Activated CD4-positive, alpha-beta memory T cell treated with anti-CD3 and anti-CD28 coated beads for 36 hours (primary cell): ENCODE measurements at regions of chr19 and their contacts with region 1.

Region 1: DNA sequence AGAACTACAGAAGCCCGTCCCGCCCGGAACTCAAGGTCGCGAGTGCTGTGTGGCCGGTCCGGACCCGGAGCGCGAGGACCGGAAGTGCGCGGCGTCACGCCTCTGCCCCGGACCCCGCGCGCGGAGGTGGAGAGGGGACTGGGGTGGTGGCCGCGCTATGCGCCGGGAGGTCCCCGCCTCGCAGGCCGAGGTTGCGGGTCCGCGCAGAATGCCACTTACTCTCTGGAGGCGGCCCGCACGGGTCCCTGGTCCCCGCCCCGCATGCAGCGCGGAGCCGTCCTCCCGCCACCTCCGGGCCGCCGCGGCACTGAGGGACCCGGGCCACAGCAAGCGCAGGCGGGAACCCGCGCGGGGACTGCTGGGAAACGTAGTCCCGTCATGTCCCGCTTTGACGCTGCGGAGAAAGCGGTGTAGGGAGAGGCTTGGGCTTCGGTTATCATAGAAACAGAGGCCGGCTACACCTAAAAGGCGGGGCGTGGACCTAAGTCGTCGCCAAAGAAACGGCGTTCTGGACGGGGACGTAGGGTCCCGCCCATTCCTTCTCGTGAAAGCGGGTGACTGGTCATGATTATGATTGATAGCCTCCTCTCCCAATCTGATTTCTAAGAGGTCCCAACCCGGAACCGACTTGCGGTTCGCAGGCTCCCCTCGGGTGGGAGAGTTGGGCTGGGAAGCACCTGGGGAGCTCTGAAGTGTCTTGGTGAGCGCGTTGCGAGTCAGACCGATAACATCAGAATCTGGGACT is at the start of gene ZNF837:
- DNase-seq: peak; percentile 99
- H3K4me3 Mint-ChIP-seq: peak within 1 kb of the TSS; percentile 84
- H3K27ac Mint-ChIP-seq: peak within 1 kb of the TSS; percentile 92
- H3K4me1 Mint-ChIP-seq: peaks cover 25% of the 10 kb centered on the region
- H3K27me3 Mint-ChIP-seq: no peaks in the 10 kb centered on the region
- total RNA-seq, gene ZNF837: 2.1 to 2.4 TPM

Region 2: DNA sequence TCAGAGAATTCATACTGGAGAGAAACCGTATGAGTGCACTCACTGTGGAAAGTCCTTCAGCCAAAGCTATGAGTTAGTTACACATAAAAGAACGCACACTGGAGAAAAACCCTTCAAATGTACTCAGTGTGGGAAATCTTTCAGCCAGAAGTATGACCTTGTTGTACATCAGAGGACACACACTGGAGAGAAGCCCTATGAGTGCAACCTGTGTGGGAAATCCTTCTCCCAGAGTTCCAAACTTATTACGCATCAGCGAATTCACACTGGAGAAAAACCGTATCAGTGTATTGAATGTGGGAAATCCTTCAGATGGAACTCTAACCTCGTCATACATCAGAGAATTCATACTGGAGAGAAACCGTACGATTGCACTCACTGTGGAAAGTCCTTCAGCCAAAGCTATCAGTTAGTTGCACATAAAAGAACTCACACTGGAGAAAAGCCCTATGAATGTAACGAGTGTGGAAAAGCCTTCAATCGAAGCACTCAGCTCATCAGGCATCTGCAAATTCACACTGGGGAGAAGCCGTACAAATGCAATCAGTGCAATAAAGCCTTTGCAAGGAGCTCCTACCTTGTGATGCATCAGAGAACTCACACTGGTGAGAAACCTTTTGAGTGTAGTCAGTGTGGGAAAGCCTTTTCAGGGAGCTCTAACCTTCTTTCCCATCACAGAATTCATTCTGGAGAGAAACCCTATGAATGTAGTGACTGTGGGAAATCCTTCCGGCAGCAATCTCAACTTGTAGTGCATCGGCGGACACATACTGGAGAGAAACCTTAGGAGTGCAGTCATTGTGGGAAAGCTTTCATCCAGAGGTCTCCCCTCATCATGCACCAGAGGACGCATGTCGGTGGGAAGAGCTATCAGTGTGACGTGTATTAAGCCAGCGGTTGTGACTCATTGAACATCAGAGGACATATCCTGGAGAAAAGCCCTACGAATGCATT is 118.6 kb before region 1 on chr19:
- CTCF ChIA-PET with region 1: no interaction called
- POLR2A ChIA-PET with region 1: no interaction called
- intact Hi-C with region 1: no loop called
- DNase-seq: no peak
- H3K4me3 Mint-ChIP-seq: no peak overlapping the region
- H3K27ac Mint-ChIP-seq: no peak overlapping the region
- H3K4me1 Mint-ChIP-seq: no peaks in the 10 kb centered on the region
- H3K27me3 Mint-ChIP-seq: no peaks in the 10 kb centered on the region

Region 3: GRCh38 chr19:58278157-58279041 is 102.5 kb before region 1 on chr19 and contains the start of gene ZNF8:
- CTCF ChIA-PET with region 1: no interaction called
- POLR2A ChIA-PET with region 1: no interaction called
- intact Hi-C with region 1: loop called (anchors 1 kb)
- DNase-seq: peak; percentile 99
- H3K4me3 Mint-ChIP-seq: peak within 1 kb of the TSS; percentile 83
- H3K27ac Mint-ChIP-seq: peak within 1 kb of the TSS; percentile 95
- H3K4me1 Mint-ChIP-seq: peaks cover 35% of the 10 kb centered on the region
- H3K27me3 Mint-ChIP-seq: no peaks in the 10 kb centered on the region
- total RNA-seq, gene ZNF8: 3.7 to 3.9 TPM

Region 4: GRCh38 chr19:58326914-58327726 is 53.8 kb before region 1 on chr19 and contains the start of gene ZSCAN22:
- CTCF ChIA-PET with region 1: no interaction called
- POLR2A ChIA-PET with region 1: no interaction called
- intact Hi-C with region 1: loop called (anchors 2 kb)
- DNase-seq: peak; percentile 95
- H3K4me3 Mint-ChIP-seq: no peak within 1 kb of the TSS
- H3K27ac Mint-ChIP-seq: no peak within 1 kb of the TSS
- H3K4me1 Mint-ChIP-seq: peaks cover 4% of the 10 kb centered on the region
- H3K27me3 Mint-ChIP-seq: no peaks in the 10 kb centered on the region
- total RNA-seq, gene ZSCAN22: 3.1 to 3.3 TPM

Region 5: DNA sequence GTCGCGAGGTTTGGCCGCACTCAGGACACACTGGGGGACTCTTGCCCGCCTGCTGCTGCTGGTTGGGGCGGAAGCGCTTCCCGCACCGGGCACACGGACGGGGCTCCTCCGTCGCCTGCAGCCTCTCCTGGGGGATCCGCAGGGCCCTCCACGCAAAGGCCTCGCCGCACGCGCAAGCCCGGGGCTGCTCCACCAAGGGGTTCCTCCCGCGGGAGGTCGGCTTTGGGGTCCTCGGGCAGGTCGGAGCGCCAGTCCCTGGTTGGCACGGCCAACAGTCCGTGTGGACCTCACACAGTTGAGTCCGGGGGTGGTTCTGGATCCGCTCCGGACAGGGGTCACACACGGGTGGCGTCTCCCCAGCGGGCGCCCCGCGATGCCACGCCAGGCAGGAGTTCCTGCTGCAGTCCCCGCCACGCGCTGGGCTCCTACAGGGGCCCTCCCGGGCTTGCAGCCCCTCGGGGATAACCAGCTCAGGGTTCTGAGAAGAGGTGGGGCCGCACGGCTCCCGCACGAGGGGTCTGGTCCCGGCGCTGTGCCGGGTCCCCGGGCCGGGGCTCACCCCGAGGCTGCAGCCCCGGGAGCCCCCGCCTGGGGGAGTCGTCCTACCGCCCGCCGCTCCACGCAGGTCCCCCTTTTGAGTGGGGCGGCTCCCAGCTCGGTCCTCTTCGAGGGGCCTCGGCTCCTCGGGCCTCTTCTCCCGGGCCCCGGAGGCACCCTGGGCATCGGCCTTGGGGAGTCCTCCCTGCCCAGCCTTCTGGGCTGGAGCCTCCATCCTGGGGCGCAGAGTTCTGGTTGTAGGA is 12.1 kb before region 1 on chr19:
- CTCF ChIA-PET with region 1: no interaction called
- POLR2A ChIA-PET with region 1: no interaction called
- intact Hi-C with region 1: no loop called
- DNase-seq: no peak
- H3K4me3 Mint-ChIP-seq: no peak overlapping the region
- H3K27ac Mint-ChIP-seq: no peak overlapping the region
- H3K4me1 Mint-ChIP-seq: no peaks in the 10 kb centered on the region
- H3K27me3 Mint-ChIP-seq: no peaks in the 10 kb centered on the region

Region 6: GRCh38 chr19:58400916-58401839 is 20.3 kb after region 1 on chr19:
- CTCF ChIA-PET with region 1: no interaction called
- POLR2A ChIA-PET with region 1: no interaction called
- intact Hi-C with region 1: loop called (anchors 1 kb)
- DNase-seq: peak; percentile 100
- H3K4me3 Mint-ChIP-seq: peak overlapping the region; percentile 82
- H3K27ac Mint-ChIP-seq: peak overlapping the region; percentile 77
- H3K4me1 Mint-ChIP-seq: peaks cover 18% of the 10 kb centered on the region
- H3K27me3 Mint-ChIP-seq: peaks cover 3% of the 10 kb centered on the region

Region 7: DNA sequence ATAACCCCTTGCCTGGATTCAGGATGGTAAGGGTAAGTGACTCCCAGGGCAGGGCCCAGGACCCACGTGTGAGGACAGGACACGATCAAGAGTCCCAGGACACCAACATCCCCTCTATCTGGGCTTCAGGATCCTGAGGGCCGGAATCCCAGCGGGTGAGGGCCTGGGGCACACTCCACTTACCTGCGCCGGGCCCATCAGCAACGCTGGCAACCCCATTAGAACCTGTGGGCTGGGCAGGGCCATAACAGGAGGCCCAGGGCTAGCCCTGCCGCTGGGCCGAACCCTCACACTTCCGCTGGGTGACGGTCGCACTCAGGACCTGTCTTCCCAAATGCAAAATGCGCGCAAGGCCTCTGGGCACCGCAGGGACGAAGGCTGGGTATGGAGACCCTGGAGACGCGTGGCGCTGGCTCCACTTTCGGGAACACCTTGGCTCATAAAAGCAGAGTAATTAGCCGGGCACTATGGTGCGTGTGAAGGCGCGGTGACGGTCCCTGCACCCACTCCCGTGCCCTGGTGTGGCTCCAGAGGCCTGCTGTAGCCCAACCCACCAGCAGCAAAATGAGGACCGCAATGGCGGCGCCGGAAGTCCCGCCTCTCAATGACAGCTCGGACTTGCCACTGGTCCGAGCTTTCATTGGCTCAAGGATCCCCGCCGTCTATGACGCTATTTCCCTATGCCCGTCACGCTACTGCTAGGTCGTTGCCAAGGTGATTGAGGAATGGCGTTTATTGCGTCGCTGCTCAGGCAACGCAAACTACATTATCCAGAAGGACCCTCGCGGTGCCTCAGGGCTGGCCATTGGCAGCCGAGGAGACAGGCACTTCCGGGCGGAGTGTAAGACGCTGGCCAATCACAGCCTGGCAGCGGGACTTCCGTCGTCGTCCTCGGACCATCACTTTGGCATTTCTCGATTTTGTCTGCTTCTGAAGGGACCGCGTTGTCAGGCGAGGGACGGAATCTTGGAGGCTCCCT is 59.0 kb after region 1 on chr19 and contains the start of gene ZNF132:
- CTCF ChIA-PET with region 1: no interaction called
- POLR2A ChIA-PET with region 1: no interaction called
- intact Hi-C with region 1: loop called (anchors 1 kb)
- DNase-seq: peak; percentile 97
- H3K4me3 Mint-ChIP-seq: peak within 1 kb of the TSS; percentile 84
- H3K27ac Mint-ChIP-seq: peak within 1 kb of the TSS; percentile 71
- H3K4me1 Mint-ChIP-seq: peaks cover 25% of the 10 kb centered on the region
- H3K27me3 Mint-ChIP-seq: no peaks in the 10 kb centered on the region
- total RNA-seq, gene ZNF132: 3.1 to 3.6 TPM

Region 8: DNA sequence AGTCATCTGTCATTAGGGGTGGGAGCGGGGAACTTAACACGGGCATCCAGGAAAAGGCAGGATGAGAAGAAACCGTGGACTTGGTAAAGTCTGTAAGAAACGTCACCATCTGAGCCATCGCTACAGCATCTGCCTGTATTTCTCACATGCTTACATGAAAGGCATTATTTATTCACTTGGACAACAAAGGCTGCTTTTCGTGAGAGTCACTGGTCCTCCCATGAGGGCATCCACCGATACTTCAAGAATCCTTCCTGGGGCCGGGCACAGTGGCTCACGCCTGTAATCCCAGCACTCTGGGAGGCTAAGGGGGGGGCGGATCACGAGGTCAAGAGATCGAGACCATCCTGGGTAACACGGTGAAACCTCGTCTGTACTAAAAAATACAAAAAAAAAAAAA is 111.4 kb after region 1 on chr19:
- CTCF ChIA-PET with region 1: no interaction called
- POLR2A ChIA-PET with region 1: interaction called, 4 read pairs
- intact Hi-C with region 1: loop called (anchors 1 kb)
- DNase-seq: no peak
- H3K4me3 Mint-ChIP-seq: no peak overlapping the region
- H3K27ac Mint-ChIP-seq: no peak overlapping the region
- H3K4me1 Mint-ChIP-seq: peaks cover 30% of the 10 kb centered on the region
- H3K27me3 Mint-ChIP-seq: no peaks in the 10 kb centered on the region